ENCODE measurements at regions of chr17 and their contacts with region 1.

Region 1: DNA sequence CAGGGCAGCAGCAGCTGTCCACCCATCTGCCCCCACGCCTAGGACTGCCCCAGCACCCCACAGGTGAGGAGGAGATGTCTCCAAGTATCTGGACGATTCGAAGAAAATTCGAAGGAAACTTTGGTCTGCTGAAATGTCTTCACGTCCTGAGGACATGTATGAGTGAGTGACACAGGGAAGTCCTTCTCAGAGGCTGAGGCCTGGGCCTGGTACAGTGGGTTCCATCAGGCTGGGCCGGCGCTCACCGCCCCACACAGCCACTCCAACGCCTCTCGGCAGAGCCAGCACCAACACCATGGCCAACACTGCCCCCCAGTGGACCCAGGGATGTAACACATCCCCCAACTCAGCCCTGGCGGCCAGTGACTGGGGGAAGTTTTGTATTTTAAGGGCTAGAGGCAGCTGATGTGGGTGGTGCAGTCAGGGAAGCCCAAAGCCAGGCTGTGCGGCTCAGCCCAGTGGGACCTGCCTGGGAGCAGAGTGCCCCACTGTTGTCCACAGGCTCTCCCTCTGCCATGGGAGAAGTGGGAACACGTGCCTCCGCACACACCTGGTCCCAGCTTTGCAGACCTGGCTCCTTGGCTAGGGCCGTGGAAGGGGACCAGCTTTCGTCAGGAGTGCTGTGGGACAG is 55.8 kb upstream of the FASN start:
- DNase-seq: peak; percentile 95
- H3K4me3 Mint-ChIP-seq: no peak overlapping the region
- H3K27ac Mint-ChIP-seq: no peak overlapping the region
- H3K4me1 Mint-ChIP-seq: peaks cover 5% of the 10 kb centered on the region
- H3K27me3 Mint-ChIP-seq: no peaks in the 10 kb centered on the region

Region 2: GRCh38 chr17:81959362-81960129 is 194.3 kb before region 1 on chr17:
- intact Hi-C with region 1: loop called (anchors 10 kb)
- DNase-seq: peak; percentile 97
- H3K4me3 Mint-ChIP-seq: peak overlapping the region; percentile 65
- H3K27ac Mint-ChIP-seq: no peak overlapping the region
- H3K4me1 Mint-ChIP-seq: peaks cover 3% of the 10 kb centered on the region
- H3K27me3 Mint-ChIP-seq: peaks cover 40% of the 10 kb centered on the region

Region 3: DNA sequence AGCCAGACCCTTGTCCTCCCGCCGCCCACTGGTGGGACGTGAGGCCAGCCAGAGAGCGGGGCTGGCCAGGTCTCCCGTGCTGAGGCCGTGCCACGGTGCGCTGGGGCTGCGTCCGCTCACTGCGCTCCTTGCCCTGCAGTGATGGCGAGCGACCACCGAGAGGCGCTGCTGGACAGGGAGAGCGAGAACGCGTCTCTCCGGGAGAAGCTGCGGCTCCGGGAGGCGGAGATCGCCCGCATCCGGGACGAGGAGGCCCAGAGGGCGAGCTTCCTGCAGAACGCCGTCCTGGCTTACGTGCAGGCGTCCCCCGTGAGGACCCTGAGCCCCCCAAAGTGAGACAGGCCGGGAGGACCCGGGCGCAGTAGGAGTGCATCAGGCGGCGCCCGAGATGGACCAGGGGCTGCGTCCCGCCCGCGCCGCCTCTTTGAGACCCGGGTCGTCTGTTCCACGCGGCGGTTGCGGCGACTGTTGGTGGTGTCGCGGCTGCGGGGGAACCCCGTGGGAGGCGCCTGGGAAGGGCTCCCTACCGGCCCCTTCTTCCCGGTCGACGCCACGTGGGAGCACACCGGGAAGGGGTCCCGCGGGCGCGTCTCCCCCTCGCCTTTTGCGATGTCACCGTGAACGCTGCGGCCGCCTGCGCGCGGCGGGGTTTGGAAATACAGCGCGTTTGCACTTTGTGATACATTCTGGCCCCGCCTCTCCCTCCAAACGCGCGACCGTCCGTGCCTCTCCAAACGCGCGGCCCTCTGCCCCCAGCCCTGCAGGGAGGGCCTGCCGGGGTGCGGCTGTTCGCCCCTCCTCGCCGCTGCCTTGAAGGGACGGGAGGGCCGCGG is 123.2 kb before region 1 on chr17:
- intact Hi-C with region 1: loop called (anchors 1 kb)
- DNase-seq: peak; percentile 97
- H3K4me3 Mint-ChIP-seq: peak overlapping the region; percentile 87
- H3K27ac Mint-ChIP-seq: peak overlapping the region; percentile 80
- H3K4me1 Mint-ChIP-seq: peaks cover 13% of the 10 kb centered on the region
- H3K27me3 Mint-ChIP-seq: no peaks in the 10 kb centered on the region

Measured in activated CD4-positive, alpha-beta T cell treated with anti-CD3 and anti-CD28 coated beads, Interleukin-2, amount 10 ng/mL, durations not matched to agents 24 days and 14 days (primary cell).